HCT116 (cell line): ENCODE measurements at regions of chr5 and their contacts with region 1.

Region 1: DNA sequence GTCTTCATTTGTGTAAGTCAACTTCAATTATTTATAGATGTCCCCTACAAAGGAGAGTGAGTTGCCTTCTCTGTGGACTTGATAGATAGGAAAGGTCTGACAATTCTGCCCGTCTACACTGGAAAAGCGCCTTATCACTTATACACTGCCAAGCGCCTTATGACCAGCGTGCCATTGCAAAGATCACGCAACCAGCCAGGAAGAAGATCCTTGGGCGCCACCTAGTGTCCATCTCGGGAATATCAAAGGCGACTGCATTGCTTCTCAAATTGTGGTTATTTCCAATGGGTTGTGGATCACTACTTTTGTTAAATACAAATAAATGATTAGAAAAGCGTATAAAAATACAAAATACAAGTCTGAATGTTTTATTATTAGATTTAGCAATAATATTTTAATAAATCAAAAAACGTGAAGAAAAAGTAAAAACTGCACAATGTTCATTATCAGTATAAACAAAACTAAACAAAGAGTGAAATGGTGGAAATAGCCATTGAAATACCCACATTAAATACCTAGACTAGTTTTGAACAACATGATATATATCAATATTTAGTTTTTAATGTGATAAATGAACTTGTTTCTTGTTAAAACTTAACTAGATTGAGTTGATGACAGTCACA is 27.8 kb downstream of the SUB1 start:
- DNase-seq: peak; percentile 64
- ATAC-seq: peak; percentile 86
- H3K4me3 ChIP-seq: no peak overlapping the region
- H3K27ac ChIP-seq: no peak overlapping the region
- H3K4me1 ChIP-seq: no peaks in the 10 kb centered on the region
- H3K27me3 ChIP-seq: no peaks in the 10 kb centered on the region
- CTCF ChIP-seq: peak; percentile 74 to 85 (median 82)
- POLR2A ChIP-seq: no peak
- RAD21 ChIP-seq: peak; percentile 80

Region 2: GRCh38 chr5:31825518-31826068 is 787.6 kb before region 1 on chr5:
- CTCF ChIA-PET with region 1: no interaction called
- POLR2A ChIA-PET with region 1: no interaction called
- RAD21 ChIA-PET with region 1: no interaction called
- intact Hi-C with region 1: loop called (anchors 10 kb)
- DNase-seq: peak; percentile 61
- ATAC-seq: peak; percentile 93
- H3K4me3 ChIP-seq: no peak overlapping the region
- H3K27ac ChIP-seq: no peak overlapping the region
- H3K4me1 ChIP-seq: no peaks in the 10 kb centered on the region
- H3K27me3 ChIP-seq: no peaks in the 10 kb centered on the region
- CTCF ChIP-seq: peak; percentile 70 to 81 (median 73)
- POLR2A ChIP-seq: no peak
- RAD21 ChIP-seq: peak; percentile 87

Region 3: GRCh38 chr5:32329308-32329834 is 283.8 kb before region 1 on chr5:
- CTCF ChIA-PET with region 1: no interaction called
- POLR2A ChIA-PET with region 1: no interaction called
- RAD21 ChIA-PET with region 1: no interaction called
- intact Hi-C with region 1: loop called (anchors 1 kb)
- DNase-seq: peak; percentile 54
- ATAC-seq: peak; percentile 90
- H3K4me3 ChIP-seq: no peak overlapping the region
- H3K27ac ChIP-seq: no peak overlapping the region
- H3K4me1 ChIP-seq: peaks cover 11 to 25% of the 10 kb centered on the region in 2 experiments
- H3K27me3 ChIP-seq: no peaks in the 10 kb centered on the region
- CTCF ChIP-seq: peak; percentile 67 to 79 (median 77)
- POLR2A ChIP-seq: no peak
- RAD21 ChIP-seq: peak; percentile 86

Region 4: DNA sequence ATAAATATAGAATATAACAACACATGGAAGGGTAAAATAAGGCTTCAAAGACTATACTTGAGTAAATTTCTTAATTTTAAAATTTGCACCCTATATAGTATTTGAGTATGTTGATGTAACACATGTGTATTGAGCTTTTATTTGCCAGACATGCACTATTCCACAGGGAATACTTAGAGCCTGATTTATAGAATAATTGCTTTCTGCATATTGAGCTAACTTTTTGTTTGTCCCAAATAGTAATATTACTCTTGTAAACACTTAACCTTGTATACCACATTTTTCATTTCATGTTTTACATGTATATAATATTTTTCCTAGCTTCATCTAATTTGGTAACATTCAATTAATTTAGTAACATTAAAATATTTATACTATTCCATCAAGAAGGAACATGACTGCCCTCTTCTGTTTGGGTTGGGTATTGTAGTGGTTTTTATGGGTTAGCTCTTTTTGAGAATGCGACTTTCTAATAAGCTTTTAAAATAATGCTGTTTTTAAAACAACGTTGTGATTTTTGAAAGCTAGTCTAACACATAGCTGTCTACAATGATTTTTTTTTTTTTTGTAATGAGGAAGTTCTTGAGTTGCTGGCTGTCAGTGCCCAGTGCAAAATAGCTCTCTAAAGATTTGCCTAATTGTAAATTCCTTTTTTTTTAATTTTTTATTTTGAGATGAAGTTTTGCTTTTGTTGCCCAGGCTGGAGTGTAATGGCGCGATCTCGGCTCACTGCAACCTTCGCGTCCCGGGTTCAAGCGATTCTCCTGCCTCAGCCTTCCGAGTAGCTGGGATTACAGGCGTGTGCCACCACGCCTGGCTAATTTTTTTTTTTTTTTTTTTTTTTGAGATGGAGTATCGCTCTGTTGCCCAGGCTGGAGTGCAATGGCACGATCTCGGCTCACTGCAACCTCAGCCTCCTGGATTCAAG is 23.0 kb before region 1 on chr5:
- CTCF ChIA-PET with region 1: interaction called, 10 read pairs
- POLR2A ChIA-PET with region 1: no interaction called
- RAD21 ChIA-PET with region 1: no interaction called
- intact Hi-C with region 1: no loop called
- DNase-seq: peak; percentile 31
- ATAC-seq: no peak
- H3K4me3 ChIP-seq: no peak overlapping the region
- H3K27ac ChIP-seq: no peak overlapping the region
- H3K4me1 ChIP-seq: peaks cover 3 to 8% of the 10 kb centered on the region in 2 experiments; a peak in 1 of 4 replicates
- H3K27me3 ChIP-seq: no peaks in the 10 kb centered on the region
- CTCF ChIP-seq: peak; percentile 45 to 65 (median 61); a peak in 5 of 6 replicates
- POLR2A ChIP-seq: no peak
- RAD21 ChIP-seq: peak; percentile 67

Region 5: DNA sequence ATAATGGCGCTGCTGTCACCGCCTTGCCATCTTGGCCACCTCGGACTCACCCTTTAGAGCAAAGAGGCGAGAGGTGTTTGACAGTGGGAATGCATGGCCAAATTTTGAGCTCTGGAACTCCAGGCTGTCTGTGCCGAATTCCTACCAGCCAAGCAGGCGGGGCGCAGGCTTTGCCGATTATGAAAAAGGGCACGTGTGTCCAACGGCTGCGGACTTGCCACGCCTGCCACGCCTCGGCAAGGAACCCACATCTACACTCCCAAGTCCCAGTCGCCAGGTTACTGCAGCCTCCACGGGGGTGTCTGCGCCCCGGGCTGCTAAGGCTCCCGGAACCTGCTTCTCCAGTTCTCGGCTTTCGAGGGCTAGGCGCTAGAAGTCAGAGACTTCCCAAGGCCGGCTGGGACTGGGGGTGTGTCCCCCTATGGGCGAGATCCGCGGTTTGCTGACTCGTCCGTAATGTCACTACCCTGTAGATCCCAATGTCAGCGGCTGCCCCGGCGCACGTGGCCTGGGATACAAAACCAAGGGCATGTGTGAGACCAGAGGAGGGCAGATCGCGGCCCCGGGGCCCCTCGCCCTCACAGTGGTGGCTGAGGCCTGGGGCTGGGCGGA is 100.7 kb after region 1 on chr5:
- CTCF ChIA-PET with region 1: no interaction called
- POLR2A ChIA-PET with region 1: no interaction called
- RAD21 ChIA-PET with region 1: no interaction called
- intact Hi-C with region 1: no loop called
- DNase-seq: no peak
- ATAC-seq: no peak
- H3K4me3 ChIP-seq: no peak overlapping the region
- H3K27ac ChIP-seq: no peak overlapping the region
- H3K4me1 ChIP-seq: peaks cover 3 to 12% of the 10 kb centered on the region in 2 experiments; a peak in 3 of 4 replicates
- H3K27me3 ChIP-seq: no peaks in the 10 kb centered on the region
- CTCF ChIP-seq: no peak
- POLR2A ChIP-seq: no peak
- RAD21 ChIP-seq: no peak

Region 6: GRCh38 chr5:32828492-32828891 is 215.3 kb after region 1 on chr5:
- CTCF ChIA-PET with region 1: no interaction called
- POLR2A ChIA-PET with region 1: no interaction called
- RAD21 ChIA-PET with region 1: no interaction called
- intact Hi-C with region 1: no loop called
- DNase-seq: no peak
- ATAC-seq: no peak
- H3K4me3 ChIP-seq: no peak overlapping the region
- H3K27ac ChIP-seq: no peak overlapping the region
- H3K4me1 ChIP-seq: no peaks in the 10 kb centered on the region
- H3K27me3 ChIP-seq: peaks cover 5% of the 10 kb centered on the region
- CTCF ChIP-seq: no peak
- POLR2A ChIP-seq: no peak
- RAD21 ChIP-seq: no peak

Region 7: DNA sequence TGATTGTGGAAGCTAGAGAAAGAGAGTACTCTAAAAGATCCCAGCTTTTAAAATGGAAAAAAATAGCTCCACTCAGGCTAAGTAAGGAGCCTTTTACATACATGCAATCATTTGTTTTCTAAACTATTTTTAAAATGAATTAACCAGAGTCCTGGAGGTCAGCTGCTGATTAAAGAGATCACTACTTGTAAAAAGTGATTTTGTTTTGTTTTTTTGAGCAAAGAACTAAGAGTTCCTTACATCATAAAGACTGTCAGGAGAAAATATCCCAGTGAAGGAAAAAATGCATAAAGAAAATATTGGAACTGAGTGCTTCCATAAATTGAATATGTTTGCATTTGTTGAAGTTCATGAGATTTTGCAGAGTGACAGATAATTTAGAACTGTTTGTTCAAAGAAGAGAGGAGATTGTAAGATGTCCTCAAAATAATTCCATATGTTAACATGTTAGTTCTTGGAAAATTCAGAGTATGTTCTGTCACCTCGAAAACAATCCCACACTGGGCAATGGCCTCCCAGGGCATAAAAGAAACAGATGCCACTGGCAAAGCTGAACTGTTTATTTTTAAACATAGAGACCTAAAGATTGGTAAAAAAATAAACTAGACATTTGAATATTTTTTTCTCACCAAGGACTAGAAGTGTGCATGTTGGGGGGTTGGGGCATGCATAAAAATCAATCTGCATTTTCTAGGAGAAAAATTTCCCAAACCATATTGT is 362.7 kb after region 1 on chr5:
- CTCF ChIA-PET with region 1: no interaction called
- POLR2A ChIA-PET with region 1: no interaction called
- RAD21 ChIA-PET with region 1: no interaction called
- intact Hi-C with region 1: no loop called
- DNase-seq: no peak
- ATAC-seq: no peak
- H3K4me3 ChIP-seq: no peak overlapping the region
- H3K27ac ChIP-seq: no peak overlapping the region
- H3K4me1 ChIP-seq: no peaks in the 10 kb centered on the region
- H3K27me3 ChIP-seq: no peaks in the 10 kb centered on the region
- CTCF ChIP-seq: no peak
- POLR2A ChIP-seq: no peak
- RAD21 ChIP-seq: no peak

Region 8: DNA sequence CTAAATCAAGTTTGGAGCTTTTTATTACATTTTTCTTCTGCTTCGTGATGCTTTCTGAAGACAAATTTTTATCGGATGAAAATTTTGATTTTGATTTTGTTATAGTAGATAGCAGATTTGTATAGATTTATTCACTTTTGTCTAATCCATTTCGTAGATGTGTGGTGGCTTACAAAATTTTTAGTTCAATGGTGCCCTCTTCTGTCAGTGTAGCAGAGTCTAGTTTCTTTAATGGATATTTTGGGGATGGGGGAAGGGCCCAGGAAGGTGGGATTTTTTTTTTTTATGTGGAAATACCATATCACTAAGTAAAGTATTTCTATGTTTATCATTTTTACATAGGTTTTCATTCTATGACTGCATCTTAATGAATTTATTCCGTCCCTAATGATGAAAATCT is 567.7 kb after region 1 on chr5:
- CTCF ChIA-PET with region 1: no interaction called
- POLR2A ChIA-PET with region 1: no interaction called
- RAD21 ChIA-PET with region 1: no interaction called
- intact Hi-C with region 1: loop called (anchors 10 kb)
- DNase-seq: peak; percentile 28
- ATAC-seq: no peak
- H3K4me3 ChIP-seq: no peak overlapping the region
- H3K27ac ChIP-seq: no peak overlapping the region
- H3K4me1 ChIP-seq: no peaks in the 10 kb centered on the region
- H3K27me3 ChIP-seq: no peaks in the 10 kb centered on the region
- CTCF ChIP-seq: peak; percentile 36 to 63 (median 59); a peak in 5 of 6 replicates
- POLR2A ChIP-seq: no peak
- RAD21 ChIP-seq: peak; percentile 76

Region 9: DNA sequence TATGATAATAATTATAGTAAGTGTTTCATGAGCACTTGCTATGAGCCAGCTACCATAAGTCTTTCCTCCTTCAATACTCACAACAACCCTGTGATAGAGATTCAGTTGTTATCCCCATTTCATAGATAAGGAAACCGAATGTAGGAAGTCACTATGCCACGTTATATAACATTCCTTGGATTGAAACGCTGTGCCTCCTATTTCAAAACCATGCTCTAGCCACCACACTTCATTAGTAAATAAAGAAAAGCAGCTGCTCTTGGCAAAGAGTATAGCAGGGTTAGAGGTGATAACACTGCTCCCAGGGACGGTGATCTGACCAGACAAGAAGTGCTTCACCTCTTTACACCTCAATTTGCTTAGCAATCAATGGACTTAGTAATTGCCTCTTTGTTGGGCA is 1273.1 kb after region 1 on chr5:
- CTCF ChIA-PET with region 1: no interaction called
- POLR2A ChIA-PET with region 1: no interaction called
- RAD21 ChIA-PET with region 1: no interaction called
- intact Hi-C with region 1: no loop called
- DNase-seq: no peak
- ATAC-seq: no peak
- H3K4me3 ChIP-seq: no peak overlapping the region
- H3K27ac ChIP-seq: no peak overlapping the region
- H3K4me1 ChIP-seq: no peaks in the 10 kb centered on the region
- H3K27me3 ChIP-seq: peaks cover 67% of the 10 kb centered on the region
- CTCF ChIP-seq: no peak
- POLR2A ChIP-seq: no peak
- RAD21 ChIP-seq: no peak